Sigmoid colon (tissue), 7 donors: ENCODE measurements at regions of chr7 and their contacts with region 1.

Region 1: DNA sequence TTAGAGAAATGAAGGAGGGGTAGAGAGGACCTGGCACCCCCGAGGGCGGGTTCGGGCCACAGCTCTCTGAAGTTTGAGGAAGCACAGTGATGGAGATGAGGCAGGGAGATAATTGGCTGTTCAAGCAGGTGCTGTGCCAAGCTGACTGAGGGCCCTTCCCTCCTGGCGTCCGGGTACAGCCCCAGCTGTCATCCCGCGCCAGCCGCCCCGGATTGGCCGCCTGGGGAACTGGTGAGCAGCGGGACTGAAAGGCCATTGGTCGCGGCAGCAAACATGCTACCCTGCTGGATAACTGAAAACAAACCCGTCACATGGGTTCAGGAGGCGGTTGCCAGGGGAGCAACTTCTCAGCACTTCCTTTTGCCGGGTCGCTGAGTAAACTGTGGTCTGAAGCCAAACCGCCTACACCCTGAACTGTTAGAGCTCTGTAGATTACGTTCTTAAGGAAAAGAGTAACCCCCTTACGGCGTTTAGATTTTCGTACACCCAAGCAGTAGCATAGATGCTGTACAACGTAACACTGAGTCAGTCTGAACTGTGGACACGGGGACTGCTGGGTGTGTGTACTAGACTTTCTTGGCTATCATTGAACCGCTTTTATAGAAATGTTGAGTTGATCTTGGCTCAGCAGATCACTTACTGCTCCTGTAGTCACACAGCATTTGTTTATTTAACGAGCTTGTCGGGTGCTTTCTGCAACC is 1.3 kb downstream of the INSIG1 start:
- DNase-seq: peak; percentile 97
- H3K4me3 ChIP-seq: peak overlapping the region; percentile 62 to 99 (median 84)
- H3K27ac ChIP-seq: peak overlapping the region; percentile 90 to 98 (median 96)
- H3K4me1 ChIP-seq: peaks cover 0 to 33% (median 21%) of the 10 kb centered on the region in 4 donors
- H3K27me3 ChIP-seq: no peaks in the 10 kb centered on the region
- CTCF ChIP-seq: peak in 1 of 4 experiments; percentile 11
- EP300 ChIP-seq: peak in 1 of 4 donors; percentile 73
- POLR2A ChIP-seq: peak in 1 of 2 donors; percentile 26

Region 2: DNA sequence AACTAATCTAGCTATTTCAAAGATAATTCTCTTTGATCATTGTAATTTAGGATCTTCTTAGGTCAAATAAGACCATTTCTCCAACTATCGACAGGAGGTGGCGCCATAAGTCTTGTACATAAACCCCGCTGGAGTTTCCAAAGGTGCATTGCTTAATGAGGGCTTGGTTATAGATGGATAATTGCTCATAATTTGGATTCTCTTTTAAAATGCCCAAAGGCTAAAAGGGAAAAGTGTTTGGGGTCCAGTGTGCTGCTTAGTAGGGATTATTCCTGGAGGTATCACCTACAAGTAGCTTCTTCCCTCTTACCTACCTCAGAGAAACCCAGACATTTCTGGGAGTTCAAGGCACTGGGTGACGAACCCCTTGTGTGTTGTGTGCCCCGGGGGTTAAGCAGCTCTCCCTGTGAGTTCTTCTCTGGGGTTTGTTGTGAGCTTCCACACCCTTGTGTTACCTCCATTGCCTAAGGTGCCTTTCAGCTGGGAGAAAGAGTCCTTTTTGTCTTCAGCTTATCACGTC is 371.3 kb before region 1 on chr7:
- intact Hi-C with region 1: loop called (anchors 5 kb)
- DNase-seq: peak; percentile 89
- H3K4me3 ChIP-seq: peak overlapping the region; percentile 42 to 63 (median 56)
- H3K27ac ChIP-seq: peak overlapping the region; percentile 87 to 90 (median 89)
- H3K4me1 ChIP-seq: peaks cover 0 to 14% (median 8%) of the 10 kb centered on the region in 4 donors
- H3K27me3 ChIP-seq: no peaks in the 10 kb centered on the region
- CTCF ChIP-seq: peak; percentile 26 to 60 (median 42)
- EP300 ChIP-seq: no peak
- POLR2A ChIP-seq: no peak

Region 3: GRCh38 chr7:155003376-155004214 is 295.4 kb before region 1 on chr7:
- intact Hi-C with region 1: loop called (anchors 2 kb)
- DNase-seq: peak; percentile 90
- H3K4me3 ChIP-seq: peak overlapping the region; percentile 83 to 100 (median 98)
- H3K27ac ChIP-seq: peak overlapping the region; percentile 91 to 95 (median 92)
- H3K4me1 ChIP-seq: peaks cover 0 to 22% (median 19%) of the 10 kb centered on the region in 4 donors
- H3K27me3 ChIP-seq: no peaks in the 10 kb centered on the region
- CTCF ChIP-seq: no peak
- EP300 ChIP-seq: no peak
- POLR2A ChIP-seq: peak; percentile 50 to 87

Region 4: DNA sequence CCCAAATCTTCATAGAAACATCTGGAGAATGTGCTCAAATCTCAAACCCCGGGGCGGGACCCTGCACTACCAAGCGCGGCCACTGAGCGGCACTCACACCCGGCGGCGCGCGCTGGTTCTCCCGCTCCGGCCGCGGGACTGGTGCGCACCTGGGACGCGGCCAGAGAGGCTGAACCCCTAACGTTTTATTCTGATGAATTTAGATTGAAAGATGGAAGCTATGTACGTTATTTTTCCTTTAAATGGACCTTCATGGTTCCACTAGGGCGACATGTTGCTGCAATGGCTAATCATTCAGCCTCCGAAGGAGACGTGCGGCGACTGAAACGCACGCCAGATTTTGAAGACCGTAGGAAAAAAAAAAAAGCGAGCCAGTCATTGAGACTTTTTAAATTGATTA is 108.3 kb before region 1 on chr7:
- intact Hi-C with region 1: loop called (anchors 5 kb)
- DNase-seq: no peak
- H3K4me3 ChIP-seq: no peak overlapping the region
- H3K27ac ChIP-seq: no peak overlapping the region
- H3K4me1 ChIP-seq: no peaks in the 10 kb centered on the region
- H3K27me3 ChIP-seq: peaks cover 0 to 26% (median 0%) of the 10 kb centered on the region in 3 donors
- CTCF ChIP-seq: peak; percentile 65 to 92 (median 76)
- EP300 ChIP-seq: no peak
- POLR2A ChIP-seq: no peak

Region 5: GRCh38 chr7:155205368-155206317 is 93.3 kb before region 1 on chr7:
- intact Hi-C with region 1: loop called (anchors 2 kb)
- DNase-seq: peak; percentile 95
- H3K4me3 ChIP-seq: peak overlapping the region; percentile 6 to 44 (median 36)
- H3K27ac ChIP-seq: peak overlapping the region; percentile 56 to 71 (median 66)
- H3K4me1 ChIP-seq: peaks cover 0 to 15% (median 8%) of the 10 kb centered on the region in 4 donors
- H3K27me3 ChIP-seq: peaks cover 0 to 9% (median 0%) of the 10 kb centered on the region in 3 donors
- CTCF ChIP-seq: no peak
- EP300 ChIP-seq: peak in 1 of 4 donors; percentile 36
- POLR2A ChIP-seq: no peak

Region 6: GRCh38 chr7:155644178-155644970 is 345.4 kb after region 1 on chr7 and contains the start of gene RBM33:
- intact Hi-C with region 1: loop called (anchors 10 kb)
- DNase-seq: peak; percentile 82
- H3K4me3 ChIP-seq: peak within 1 kb of the TSS; percentile 90 to 99 (median 94)
- H3K27ac ChIP-seq: peak within 1 kb of the TSS; percentile 91 to 98 (median 95)
- H3K4me1 ChIP-seq: peaks cover 0 to 34% (median 22%) of the 10 kb centered on the region in 4 donors
- H3K27me3 ChIP-seq: no peaks in the 10 kb centered on the region
- CTCF ChIP-seq: no peak
- EP300 ChIP-seq: no peak
- POLR2A ChIP-seq: no peak
- total RNA-seq, gene RBM33: 27.5 to 60.4 (median 36.1) TPM